Activated B cell treated with CpG ODN at 0.5 μM for 24 hours (primary cell): ENCODE measurements at regions of chr18 and their contacts with region 1.

Region 1: GRCh38 chr18:11947214-11948191 is 33.8 kb upstream of the IMPA2 start:
- DNase-seq: peak; percentile 49
- ATAC-seq: peak; percentile 81
- H3K4me3 Mint-ChIP-seq: peak overlapping the region; percentile 84
- H3K27ac Mint-ChIP-seq: peak overlapping the region; percentile 70
- H3K4me1 Mint-ChIP-seq: peaks cover 13% of the 10 kb centered on the region
- H3K27me3 Mint-ChIP-seq: no peaks in the 10 kb centered on the region
- CTCF ChIP-seq: no peak

Region 2: DNA sequence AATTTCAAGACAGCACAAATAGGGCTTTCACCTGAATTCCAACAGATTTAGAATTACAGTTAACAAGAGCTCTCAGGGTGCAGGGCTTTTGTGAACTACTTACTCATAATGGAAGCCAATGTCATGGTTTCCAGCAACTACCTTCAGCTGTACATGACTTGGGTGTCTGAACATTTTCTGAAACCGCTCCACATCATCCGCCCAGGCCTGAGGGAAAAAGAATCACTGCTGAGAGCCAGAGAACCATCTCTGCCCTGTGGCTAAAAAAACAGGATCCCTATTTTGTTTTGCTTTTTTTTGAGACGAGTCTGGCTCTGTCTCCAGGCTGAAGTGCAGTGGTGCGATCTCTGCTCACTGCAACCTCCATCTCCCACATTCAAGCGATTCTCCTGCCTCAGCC is 58.2 kb before region 1 on chr18:
- CTCF ChIA-PET with region 1: no interaction called
- POLR2A ChIA-PET with region 1: no interaction called
- intact Hi-C with region 1: no loop called
- DNase-seq: no peak
- ATAC-seq: no peak
- H3K4me3 Mint-ChIP-seq: no peak overlapping the region
- H3K27ac Mint-ChIP-seq: no peak overlapping the region
- H3K4me1 Mint-ChIP-seq: peaks cover 21% of the 10 kb centered on the region
- H3K27me3 Mint-ChIP-seq: no peaks in the 10 kb centered on the region
- CTCF ChIP-seq: no peak

Region 3: DNA sequence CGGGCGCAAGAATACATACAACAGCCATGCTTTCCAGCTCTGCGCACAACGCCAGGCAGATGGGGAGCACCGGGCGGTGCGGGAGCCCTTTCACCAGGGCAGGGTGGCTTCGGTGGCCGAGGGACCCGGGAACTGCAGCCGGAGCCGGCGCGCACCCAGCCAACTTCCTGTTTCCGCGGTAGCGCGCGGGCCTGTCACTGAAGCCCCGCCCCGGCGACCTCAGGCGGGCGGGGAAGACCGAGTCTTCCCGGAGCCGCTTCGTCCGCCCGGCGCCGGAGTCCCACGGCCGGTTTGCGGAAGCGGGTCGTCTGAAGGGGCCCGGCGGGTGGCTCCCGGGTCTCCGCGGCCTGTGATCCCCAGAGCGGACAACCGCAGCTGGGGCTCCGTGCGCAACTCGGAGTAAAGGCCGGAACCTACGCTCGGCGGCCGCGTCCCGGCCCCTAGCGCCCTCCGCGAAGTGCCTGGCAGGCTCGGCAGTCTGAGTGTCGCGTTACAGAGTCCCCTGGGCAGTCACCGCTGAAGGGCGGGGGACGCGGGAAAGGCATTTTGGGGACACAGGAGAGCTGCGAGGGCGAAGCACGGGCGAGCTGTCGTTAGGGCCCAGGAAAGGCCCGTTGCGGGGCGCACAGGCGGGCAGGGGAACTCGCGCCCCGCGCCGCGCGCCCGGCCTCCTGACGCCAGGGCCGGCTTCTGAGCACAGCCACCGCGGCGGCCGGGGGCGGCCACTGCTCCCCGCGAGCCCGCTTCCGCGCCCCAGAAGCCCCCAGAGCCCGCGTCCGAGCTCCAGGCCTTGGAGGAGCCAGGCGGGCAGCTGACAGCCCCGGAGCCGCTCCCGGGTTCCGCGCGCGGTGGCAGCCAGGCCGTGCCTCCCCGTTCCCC is 39.1 kb before region 1 on chr18 and contains the start of gene MPPE1:
- CTCF ChIA-PET with region 1: no interaction called
- POLR2A ChIA-PET with region 1: interaction called, 5 read pairs
- intact Hi-C with region 1: loop called (anchors 1 kb)
- DNase-seq: peak; percentile 87
- ATAC-seq: peak; percentile 91
- H3K4me3 Mint-ChIP-seq: peak within 1 kb of the TSS; percentile 94
- H3K27ac Mint-ChIP-seq: peak within 1 kb of the TSS; percentile 94
- H3K4me1 Mint-ChIP-seq: peaks cover 25% of the 10 kb centered on the region
- H3K27me3 Mint-ChIP-seq: no peaks in the 10 kb centered on the region
- CTCF ChIP-seq: no peak
- total RNA-seq, gene MPPE1: 39.0 and 52.9 TPM in 2 replicates

Region 4: DNA sequence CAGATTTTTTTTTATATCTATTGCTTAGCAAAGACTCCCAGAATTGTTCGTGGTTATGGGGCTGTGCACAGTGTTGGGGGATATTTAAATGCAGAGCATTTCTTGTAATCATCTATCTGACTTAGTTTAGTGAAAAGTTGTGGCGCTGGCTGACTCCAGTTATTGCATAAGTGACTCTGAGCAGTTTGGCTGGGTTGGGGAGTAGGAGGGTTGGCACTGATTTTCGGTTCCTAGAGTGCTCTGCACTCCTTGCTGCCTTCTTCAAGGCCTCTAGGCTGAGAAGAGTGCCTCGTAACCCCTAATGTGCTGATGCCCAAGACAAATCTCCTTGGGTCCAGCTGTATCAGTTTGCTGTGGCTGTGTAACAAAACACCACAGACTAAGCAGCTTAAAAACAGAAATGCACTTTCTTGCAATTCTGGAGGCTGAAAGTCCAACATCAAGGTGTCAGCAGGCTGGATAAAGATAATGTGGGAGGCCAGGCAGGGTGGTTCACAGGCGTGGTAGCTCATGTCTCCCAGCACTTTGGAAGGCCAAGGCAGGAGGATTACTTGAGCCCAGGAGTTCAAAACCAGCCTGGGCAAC is 27.3 kb after region 1 on chr18:
- CTCF ChIA-PET with region 1: no interaction called
- POLR2A ChIA-PET with region 1: no interaction called
- intact Hi-C with region 1: no loop called
- DNase-seq: no peak
- ATAC-seq: no peak
- H3K4me3 Mint-ChIP-seq: no peak overlapping the region
- H3K27ac Mint-ChIP-seq: no peak overlapping the region
- H3K4me1 Mint-ChIP-seq: peaks cover under 1% of the 10 kb centered on the region
- H3K27me3 Mint-ChIP-seq: no peaks in the 10 kb centered on the region
- CTCF ChIP-seq: no peak

Region 5: DNA sequence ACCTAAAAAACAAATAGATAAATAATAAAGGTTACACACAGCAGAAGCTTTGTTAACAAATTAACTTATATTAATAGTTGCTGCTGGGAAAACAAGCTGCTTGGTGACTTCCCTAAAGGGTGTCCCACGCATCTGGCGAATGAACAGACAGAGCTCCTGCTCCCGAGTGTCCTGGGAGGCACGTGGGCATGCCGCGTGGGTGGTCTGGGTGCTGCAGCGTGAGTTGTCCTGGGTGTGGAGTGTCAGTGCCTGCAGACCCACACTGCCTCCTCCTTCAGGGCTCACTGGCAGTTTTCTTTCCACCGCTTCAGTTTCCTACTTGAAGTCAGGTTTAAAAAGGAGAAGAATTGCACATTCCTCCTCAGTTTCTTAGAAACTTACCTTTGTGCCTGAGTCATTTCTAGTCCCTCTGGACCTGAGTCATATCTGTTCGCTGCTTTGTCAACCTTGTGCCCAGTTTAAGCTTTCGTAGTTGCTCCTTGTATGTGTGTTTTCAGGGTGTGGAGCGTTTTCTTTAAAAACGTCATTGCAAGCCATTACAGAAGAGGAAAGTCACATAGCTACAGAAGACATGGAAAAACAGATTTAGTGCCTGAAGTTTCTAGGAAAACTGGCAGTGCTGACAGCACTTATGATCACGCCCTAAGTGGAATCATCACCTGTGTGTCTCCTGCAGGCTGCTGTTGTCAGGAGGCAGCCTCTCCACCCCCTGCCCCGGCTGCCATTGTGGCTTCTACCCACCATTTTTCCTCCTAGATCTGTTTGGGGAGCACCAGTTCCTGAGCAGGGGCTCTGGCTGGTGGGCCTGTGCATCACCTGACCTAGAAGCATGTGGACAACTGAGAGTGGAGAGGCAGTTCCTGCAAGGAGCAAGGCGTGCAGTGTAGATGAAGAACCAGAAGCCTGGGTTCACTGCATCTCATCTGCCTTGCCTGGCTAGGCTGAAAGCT is 58.3 kb after region 1 on chr18:
- CTCF ChIA-PET with region 1: no interaction called
- POLR2A ChIA-PET with region 1: no interaction called
- intact Hi-C with region 1: no loop called
- DNase-seq: no peak
- ATAC-seq: no peak
- H3K4me3 Mint-ChIP-seq: no peak overlapping the region
- H3K27ac Mint-ChIP-seq: no peak overlapping the region
- H3K4me1 Mint-ChIP-seq: peaks cover 4% of the 10 kb centered on the region
- H3K27me3 Mint-ChIP-seq: no peaks in the 10 kb centered on the region
- CTCF ChIP-seq: no peak

Region 6: GRCh38 chr18:13245481-13246000 is 1298.0 kb after region 1 on chr18:
- CTCF ChIA-PET with region 1: no interaction called
- POLR2A ChIA-PET with region 1: no interaction called
- intact Hi-C with region 1: no loop called
- DNase-seq: no peak
- ATAC-seq: no peak
- H3K4me3 Mint-ChIP-seq: no peak overlapping the region
- H3K27ac Mint-ChIP-seq: no peak overlapping the region
- H3K4me1 Mint-ChIP-seq: no peaks in the 10 kb centered on the region
- H3K27me3 Mint-ChIP-seq: peaks cover 4% of the 10 kb centered on the region
- CTCF ChIP-seq: no peak